HAP-1 (cell line): ENCODE measurements at regions of chr14 and their contacts with region 1.

Region 1: GRCh38 chr14:39015360-39015961 is 87.6 kb downstream of the SEC23A start:
- DNase-seq: peak; percentile 46 to 51
- H3K4me3 ChIP-seq: no peak overlapping the region
- H3K4me1 ChIP-seq: no peaks in the 10 kb centered on the region
- H3K27me3 ChIP-seq: no peaks in the 10 kb centered on the region

Region 2: DNA sequence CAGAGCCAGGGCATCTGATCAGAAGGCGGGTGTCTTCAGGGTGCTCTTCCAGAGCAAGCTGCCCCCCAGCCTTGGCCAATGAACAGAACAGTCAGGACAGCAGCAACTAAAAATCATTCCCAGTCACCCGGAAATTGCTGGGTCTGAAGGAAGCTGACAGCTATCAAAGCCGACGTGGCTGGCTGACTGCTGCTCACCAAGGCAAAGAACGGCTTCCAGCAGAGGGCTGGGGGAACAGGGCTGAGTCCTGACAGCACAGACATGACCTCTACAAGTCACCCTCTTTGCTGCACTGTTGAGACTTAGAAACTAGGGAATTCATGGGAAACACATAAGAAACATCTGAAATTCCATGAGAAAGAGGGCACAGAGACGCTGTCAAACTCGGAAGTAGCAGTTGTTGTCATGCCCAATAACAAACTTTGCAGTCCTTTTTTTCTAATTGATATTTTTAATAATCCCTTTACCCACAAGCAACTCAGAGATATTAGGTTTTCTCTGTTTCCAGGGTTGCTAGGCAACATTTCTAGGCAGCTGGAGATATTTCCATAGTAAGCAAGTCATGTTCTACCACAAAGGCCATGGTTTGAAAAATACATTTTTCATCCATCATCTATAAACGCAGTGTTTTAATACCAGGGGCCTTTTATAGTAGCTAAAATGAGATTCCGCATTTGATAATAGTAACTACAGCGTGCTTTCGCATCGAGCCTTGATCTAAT is 277.6 kb before region 1 on chr14:
- in situ Hi-C with region 1: loop called (anchors 25 kb)
- DNase-seq: no peak
- H3K4me3 ChIP-seq: no peak overlapping the region
- H3K4me1 ChIP-seq: no peaks in the 10 kb centered on the region
- H3K27me3 ChIP-seq: no peaks in the 10 kb centered on the region

Region 3: DNA sequence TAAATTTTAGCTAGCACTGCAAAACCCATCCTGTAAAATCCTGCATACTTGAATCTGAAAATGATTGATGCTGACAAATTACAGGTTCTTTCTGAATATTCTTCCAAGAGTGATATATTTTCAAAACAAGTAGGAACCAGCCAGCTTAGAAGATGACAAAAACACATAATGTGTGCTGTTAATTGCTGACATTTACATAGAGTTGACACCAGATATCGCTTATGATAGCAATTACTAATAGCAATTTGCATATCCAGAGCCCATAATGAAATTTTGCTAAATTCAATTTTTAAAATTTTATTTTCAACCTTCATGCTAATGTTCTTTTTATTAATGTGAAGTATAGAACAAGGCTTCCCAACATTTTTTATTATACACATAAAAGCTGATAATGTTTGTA is 196.9 kb before region 1 on chr14:
- in situ Hi-C with region 1: no loop called
- DNase-seq: no peak
- H3K4me3 ChIP-seq: no peak overlapping the region
- H3K4me1 ChIP-seq: no peaks in the 10 kb centered on the region
- H3K27me3 ChIP-seq: no peaks in the 10 kb centered on the region

Region 4: GRCh38 chr14:39266871-39267591 is 251.6 kb after region 1 on chr14:
- in situ Hi-C with region 1: no loop called
- DNase-seq: peak; percentile 79 to 84
- H3K4me3 ChIP-seq: peak overlapping the region; percentile 63
- H3K4me1 ChIP-seq: peaks cover 22% of the 10 kb centered on the region
- H3K27me3 ChIP-seq: no peaks in the 10 kb centered on the region